AG04449 (cell line): ENCODE measurements at regions of chr15 and their contacts with region 1.

Region 1: DNA sequence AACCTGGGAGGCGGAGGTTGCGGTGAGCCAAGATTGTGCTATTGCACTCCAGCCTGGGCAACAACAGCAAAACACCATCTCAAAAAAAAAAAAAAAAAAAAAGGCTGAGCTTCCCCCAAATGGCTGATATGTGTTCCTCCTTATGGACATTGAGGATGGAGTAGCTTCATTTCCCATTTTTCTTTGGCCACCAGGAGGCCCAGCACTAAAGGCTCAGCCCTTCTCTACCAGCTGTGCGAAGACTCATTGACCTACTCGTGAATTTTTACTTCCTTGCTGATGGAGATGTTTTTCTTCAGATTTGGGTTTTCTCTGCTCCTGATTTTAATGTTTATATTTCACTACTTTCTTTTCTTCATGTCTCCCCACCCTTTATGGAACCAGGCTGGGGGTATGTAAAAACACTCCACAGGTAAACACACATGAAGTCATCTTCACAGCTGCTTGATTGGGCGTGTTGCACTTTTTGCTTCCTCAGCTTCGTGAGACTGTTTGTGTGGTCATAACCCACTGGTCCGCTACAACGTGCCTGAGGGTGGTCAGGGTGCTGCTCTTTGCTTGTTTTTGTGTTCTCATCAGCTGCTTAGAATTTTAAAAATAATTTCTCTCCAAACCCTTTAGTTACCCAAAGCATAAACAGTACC is 13.5 kb downstream of the SEMA4B start:
- DNase-seq: no peak
- H3K4me3 ChIP-seq: no peak overlapping the region
- CTCF ChIP-seq: peak; percentile 22

Region 2: DNA sequence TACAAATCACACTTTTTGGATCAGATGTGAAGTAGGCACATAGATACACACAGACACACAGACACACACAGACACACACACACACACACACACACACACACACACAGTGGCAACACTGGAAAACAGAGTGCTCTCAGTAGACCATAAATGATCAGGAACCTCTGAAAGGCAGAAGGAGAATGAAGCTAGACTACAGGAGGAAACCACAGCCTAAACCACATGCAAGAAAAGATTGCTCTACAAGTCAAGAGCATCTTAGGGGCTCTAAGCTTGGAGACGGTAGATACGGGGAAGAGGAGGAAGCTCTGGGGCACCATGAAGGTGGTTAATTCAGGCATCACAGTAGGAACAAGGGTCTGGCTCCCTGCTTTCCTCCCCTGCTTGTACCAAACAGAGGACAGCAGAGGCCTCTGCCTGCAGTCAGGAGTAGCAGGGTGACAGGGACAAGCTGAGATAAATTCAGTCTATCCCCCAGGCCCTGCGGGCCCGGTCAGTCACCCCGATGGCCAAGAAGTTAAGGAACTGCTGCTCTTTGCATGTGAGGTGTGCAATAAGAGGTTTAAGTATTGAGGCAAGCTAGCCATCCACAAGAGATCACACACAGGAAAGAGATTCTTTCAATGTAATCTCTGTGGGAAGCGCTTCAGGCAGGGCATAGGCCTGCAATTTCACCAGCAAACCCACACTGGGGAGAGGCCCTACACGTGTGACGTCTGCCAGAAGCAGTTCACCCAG is 278.5 kb before region 1 on chr15:
- CTCF ChIA-PET with region 1: no interaction called
- POLR2A ChIA-PET with region 1: no interaction called
- DNase-seq: no peak
- H3K4me3 ChIP-seq: no peak overlapping the region
- CTCF ChIP-seq: no peak

Region 3: GRCh38 chr15:90227816-90228772 is 13.4 kb after region 1 on chr15:
- CTCF ChIA-PET with region 1: interaction called, 10 read pairs
- POLR2A ChIA-PET with region 1: no interaction called
- DNase-seq: no peak
- H3K4me3 ChIP-seq: no peak overlapping the region
- CTCF ChIP-seq: no peak

Region 4: DNA sequence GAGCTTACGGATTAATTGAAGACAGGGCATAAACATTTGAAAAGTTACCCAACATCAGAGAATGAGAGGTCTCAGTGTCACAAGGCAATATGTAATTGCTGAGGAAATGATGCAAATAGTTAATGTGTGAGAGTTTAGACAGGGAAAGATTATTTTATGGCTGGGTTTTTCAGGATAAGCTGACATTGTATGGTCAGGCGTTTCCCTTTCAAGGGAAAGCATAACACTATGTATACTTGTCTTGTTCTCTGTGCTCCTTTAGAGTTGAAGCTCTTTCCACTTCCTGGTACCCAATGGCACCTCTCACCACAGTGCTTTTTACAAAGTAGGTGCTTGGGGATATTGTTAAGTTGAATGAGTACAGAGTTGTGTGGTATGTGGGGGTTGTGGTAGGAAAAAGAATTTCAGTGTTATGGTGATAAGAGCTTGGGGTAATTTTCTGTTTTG is 193.2 kb after region 1 on chr15:
- CTCF ChIA-PET with region 1: no interaction called
- POLR2A ChIA-PET with region 1: no interaction called
- DNase-seq: no peak
- H3K4me3 ChIP-seq: no peak overlapping the region
- CTCF ChIP-seq: no peak